HEK293T (cell line): ENCODE measurements at regions of chr19 and their contacts with region 1.

Region 1: GRCh38 chr19:11558881-11559828 is at the start of gene ELOF1:
- DNase-seq: peak; percentile 99

Region 2: DNA sequence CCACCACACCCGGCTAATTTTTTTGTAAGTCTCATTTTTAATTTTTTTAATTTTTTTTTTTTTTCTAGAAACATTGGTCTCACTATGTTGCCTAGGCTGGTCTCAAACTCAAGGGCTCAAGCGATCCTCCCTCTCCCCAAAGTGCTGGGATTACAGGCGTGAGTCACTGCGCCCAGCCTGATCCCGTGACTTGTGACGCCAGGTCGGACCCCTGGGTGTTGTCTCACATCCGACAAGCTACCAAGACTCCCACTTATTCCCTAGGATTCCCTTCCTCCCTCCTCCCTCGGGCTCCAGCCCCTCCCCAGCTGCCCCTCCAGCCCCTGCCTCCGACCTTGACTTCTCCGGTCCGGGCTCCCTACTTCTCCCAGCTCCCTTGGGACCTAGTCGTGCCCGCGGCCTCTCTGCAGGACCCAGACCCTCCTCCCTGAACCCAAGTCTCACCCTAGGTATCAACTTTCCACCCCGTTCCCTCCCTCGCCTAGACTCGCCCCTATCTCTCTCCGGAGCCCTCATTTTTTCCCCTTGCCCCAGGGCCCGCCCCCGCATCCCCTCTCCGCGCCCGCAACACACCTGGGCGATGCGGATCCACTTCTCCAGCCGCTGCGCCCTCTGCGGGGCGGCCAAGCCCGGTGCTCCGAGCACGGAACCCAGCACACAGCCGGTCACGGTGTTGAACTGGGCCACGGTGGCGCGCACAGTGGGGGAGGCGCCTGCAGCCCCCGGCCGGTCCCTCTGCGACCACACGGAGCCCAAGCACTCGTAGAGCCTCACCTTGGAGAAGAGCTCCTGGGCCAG is 153.1 kb before region 1 on chr19:
- CTCF ChIA-PET with region 1: no interaction called
- POLR2A ChIA-PET with region 1: no interaction called
- DNase-seq: no peak

Region 3: GRCh38 chr19:11528551-11529341 is 30.4 kb before region 1 on chr19 and contains the start of gene ECSIT:
- CTCF ChIA-PET with region 1: interaction called, 3 read pairs
- POLR2A ChIA-PET with region 1: interaction called, 13 read pairs
- DNase-seq: peak; percentile 94

Region 4: DNA sequence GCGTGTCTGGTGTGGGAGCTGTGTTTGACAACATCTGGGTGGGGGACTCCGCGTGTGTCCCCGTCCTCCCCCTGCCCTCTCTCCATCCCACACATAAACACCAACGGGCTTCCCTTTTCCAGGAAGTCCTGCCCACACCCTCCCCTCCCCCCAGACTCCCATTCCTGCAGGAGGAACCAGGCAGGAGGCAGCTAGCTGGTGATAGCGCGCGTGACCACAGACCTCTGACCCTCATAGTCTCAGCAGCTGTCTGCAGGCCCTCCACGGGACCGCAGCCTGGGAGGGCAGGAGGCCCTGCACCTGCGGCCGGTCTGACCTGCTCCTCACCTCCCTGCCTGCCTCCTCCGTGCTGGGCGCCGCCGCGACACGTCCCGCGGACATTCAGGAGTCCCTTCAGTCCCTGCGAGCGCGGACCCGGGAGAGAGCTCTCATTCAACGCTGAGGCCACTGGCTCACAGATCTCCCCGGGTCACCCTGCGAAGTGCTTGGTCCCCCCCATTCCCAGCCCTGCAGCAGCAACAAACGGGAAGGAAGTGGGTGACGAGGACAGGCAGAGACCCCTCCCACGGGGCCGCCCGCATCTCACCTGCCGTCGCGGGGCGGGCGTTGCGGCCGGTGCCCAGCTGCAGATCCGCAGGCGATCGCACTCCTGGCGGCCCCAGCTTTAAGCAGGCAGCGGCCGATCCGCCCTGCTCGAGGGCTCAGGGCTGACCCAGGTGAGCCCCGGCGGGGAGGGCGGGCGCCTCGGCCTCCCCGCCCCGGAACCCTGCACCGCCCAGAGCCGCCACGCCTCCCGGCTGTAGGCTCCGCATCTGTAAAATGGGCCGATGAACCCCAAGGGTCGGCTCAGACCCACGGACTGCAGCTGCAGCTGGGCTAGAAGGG is 19.3 kb after region 1 on chr19:
- CTCF ChIA-PET with region 1: interaction called, 3 read pairs
- POLR2A ChIA-PET with region 1: interaction called, 10 read pairs
- DNase-seq: no peak

Region 5: DNA sequence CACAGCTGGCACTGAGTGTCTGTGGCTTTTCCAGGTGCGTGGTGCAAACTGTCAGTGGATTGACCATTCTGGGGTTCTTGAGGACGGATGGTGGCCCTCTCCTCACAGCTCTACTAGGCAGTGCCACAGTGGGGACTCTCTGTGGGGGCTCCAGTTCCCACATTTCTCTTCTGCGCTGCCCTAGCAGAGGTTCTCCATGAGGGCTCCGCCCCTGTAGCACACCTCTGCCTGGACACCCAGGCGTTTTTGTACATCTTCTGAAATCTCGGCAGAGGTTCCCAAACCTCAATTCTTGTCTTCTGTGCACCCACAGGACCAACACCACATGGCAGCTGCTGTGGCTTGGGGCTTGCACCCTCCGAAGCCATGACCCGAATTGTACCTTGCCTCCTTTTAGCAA is 47.3 kb after region 1 on chr19:
- CTCF ChIA-PET with region 1: no interaction called
- POLR2A ChIA-PET with region 1: no interaction called
- DNase-seq: no peak